Common myeloid progenitor, CD34-positive (primary cell): ENCODE measurements at regions of chr9 and their contacts with region 1.

Region 1: DNA sequence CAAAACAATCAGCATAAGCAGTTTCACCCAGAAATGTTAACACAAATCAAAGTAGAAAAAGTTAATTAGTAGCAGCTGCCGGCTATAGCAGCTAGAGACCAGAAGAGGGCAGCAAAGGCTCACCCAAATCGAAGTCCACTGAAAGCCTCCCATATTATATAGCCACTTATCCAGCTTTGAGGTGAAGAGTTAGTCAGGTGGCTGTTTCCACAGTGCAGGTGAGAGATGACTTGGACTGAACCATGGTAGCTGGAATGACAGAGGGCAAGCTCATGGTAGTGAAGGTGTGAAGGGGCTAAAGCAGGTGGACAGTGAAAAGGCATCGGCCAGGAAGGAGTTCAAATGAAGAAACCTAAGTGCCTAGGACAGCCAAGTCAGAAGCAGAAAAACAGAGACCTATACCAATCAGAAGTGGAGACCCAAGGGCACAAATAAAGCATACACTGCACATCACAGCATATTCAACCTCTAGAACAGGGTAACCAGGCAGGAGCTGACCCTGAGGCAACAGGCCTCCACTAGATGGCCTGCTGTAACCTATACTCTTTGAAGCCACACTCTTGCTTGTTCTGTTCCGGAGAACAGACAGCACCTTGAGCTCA is 7.2 kb upstream of the RNF38 start:
- DNase-seq: peak; percentile 73 to 87 (median 74)
- H3K4me3 ChIP-seq: no peak overlapping the region
- H3K27ac ChIP-seq: no peak overlapping the region
- H3K4me1 ChIP-seq: no peaks in the 10 kb centered on the region
- H3K27me3 ChIP-seq: no peaks in the 10 kb centered on the region

Region 2: DNA sequence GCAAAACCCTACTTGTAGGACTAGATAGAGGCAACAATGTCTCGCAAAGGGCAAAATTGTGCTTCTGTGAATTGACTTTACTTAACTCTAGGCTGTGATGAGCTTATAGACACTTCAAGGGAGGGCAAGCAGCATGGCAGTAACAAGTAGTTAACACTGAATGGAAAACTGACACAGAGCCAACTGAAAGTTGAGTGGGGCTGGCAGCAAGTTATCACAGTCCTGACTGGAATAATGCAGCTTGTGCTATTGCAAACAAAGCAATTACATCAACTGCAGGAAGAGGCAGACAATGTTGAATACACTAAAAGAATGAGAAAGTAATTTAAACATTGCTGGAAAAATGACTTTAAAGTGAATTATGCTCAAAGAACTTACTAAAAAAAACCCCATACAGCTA is 69.4 kb before region 1 on chr9:
- CTCF ChIA-PET with region 1: no interaction called
- POLR2A ChIA-PET with region 1: no interaction called
- DNase-seq: no peak
- H3K4me3 ChIP-seq: no peak overlapping the region
- H3K27ac ChIP-seq: no peak overlapping the region
- H3K4me1 ChIP-seq: no peaks in the 10 kb centered on the region
- H3K27me3 ChIP-seq: no peaks in the 10 kb centered on the region

Region 3: GRCh38 chr9:36364577-36364976 is 42.6 kb before region 1 on chr9:
- CTCF ChIA-PET with region 1: no interaction called
- POLR2A ChIA-PET with region 1: no interaction called
- DNase-seq: no peak
- H3K4me3 ChIP-seq: no peak overlapping the region
- H3K27ac ChIP-seq: no peak overlapping the region
- H3K4me1 ChIP-seq: no peaks in the 10 kb centered on the region
- H3K27me3 ChIP-seq: no peaks in the 10 kb centered on the region

Region 4: DNA sequence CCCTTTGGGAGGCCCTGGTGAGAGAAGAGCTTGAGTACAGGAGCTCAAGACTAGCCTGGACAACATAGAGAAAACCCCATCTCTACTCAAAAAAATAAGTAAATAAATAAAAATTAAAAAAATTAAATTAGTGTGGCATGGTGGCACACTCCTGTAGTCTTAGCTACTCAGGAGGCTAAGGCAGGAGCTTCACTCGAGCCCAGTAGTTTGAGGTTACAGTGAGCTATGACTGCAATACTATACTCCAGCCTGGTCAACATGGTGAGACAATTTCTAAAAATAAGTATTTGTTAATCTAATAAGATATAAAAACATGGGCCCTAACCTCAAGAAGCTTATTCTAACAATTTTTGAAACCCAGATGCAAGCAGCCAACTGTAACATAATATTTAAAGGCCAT is 14.7 kb before region 1 on chr9:
- CTCF ChIA-PET with region 1: interaction called, 10 read pairs
- POLR2A ChIA-PET with region 1: no interaction called
- DNase-seq: no peak
- H3K4me3 ChIP-seq: no peak overlapping the region
- H3K27ac ChIP-seq: no peak overlapping the region
- H3K4me1 ChIP-seq: peaks cover 3 to 19% (median 10%) of the 10 kb centered on the region in 4 experiments
- H3K27me3 ChIP-seq: no peaks in the 10 kb centered on the region

Region 5: GRCh38 chr9:36450110-36450732 is 43.0 kb after region 1 on chr9:
- CTCF ChIA-PET with region 1: interaction called, 274 read pairs
- POLR2A ChIA-PET with region 1: no interaction called
- DNase-seq: peak; percentile 57 to 64 (median 59)
- H3K4me3 ChIP-seq: no peak overlapping the region
- H3K27ac ChIP-seq: no peak overlapping the region
- H3K4me1 ChIP-seq: no peaks in the 10 kb centered on the region
- H3K27me3 ChIP-seq: no peaks in the 10 kb centered on the region

Region 6: DNA sequence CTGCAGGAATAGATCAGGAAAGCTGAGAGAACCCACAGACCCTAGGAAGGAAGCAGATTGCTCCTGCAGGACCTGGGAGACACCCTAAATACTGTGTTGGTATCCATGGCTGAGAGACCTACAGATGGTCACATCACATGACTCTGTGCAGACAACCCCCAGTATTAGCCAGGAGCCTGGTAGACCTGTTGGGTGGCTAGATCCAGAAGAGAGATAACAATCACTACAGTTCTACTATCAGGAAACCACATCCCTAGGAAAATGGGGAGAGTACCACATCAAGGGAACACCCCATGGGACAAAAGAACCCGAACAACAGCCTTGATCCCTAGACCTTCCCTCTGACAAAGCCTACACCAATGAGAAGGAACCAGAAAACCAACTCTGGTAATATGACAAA is 141.2 kb after region 1 on chr9:
- CTCF ChIA-PET with region 1: interaction called, 216 read pairs
- POLR2A ChIA-PET with region 1: no interaction called
- DNase-seq: no peak
- H3K4me3 ChIP-seq: no peak overlapping the region
- H3K27ac ChIP-seq: no peak overlapping the region
- H3K4me1 ChIP-seq: peaks cover 0 to 6% (median 0%) of the 10 kb centered on the region in 4 experiments
- H3K27me3 ChIP-seq: no peaks in the 10 kb centered on the region

Region 7: GRCh38 chr9:36698984-36699383 is 291.8 kb after region 1 on chr9:
- CTCF ChIA-PET with region 1: no interaction called
- POLR2A ChIA-PET with region 1: no interaction called
- DNase-seq: no peak
- H3K4me3 ChIP-seq: no peak overlapping the region
- H3K27ac ChIP-seq: no peak overlapping the region
- H3K4me1 ChIP-seq: no peaks in the 10 kb centered on the region
- H3K27me3 ChIP-seq: no peaks in the 10 kb centered on the region

Region 8: GRCh38 chr9:36728651-36729520 is 321.7 kb after region 1 on chr9:
- CTCF ChIA-PET with region 1: interaction called, 14 read pairs
- POLR2A ChIA-PET with region 1: no interaction called
- DNase-seq: peak; percentile 56 to 74 (median 68)
- H3K4me3 ChIP-seq: no peak overlapping the region
- H3K27ac ChIP-seq: no peak overlapping the region
- H3K4me1 ChIP-seq: peaks cover 0 to 2% (median 0%) of the 10 kb centered on the region in 4 experiments
- H3K27me3 ChIP-seq: peaks cover 0 to 2% (median 0%) of the 10 kb centered on the region in 5 experiments